OCI-LY7 (cell line): ENCODE measurements at regions of chr13 and their contacts with region 1.

Region 1: GRCh38 chr13:27523346-27524073 is 73.1 kb upstream of the MTIF3 start:
- DNase-seq: no peak
- H3K4me3 ChIP-seq: no peak overlapping the region
- H3K27ac ChIP-seq: no peak overlapping the region
- H3K4me1 ChIP-seq: no peaks in the 10 kb centered on the region
- CTCF ChIP-seq: no peak

Region 2: GRCh38 chr13:27374650-27375049 is 148.9 kb before region 1 on chr13:
- CTCF ChIA-PET with region 1: no interaction called
- POLR2A ChIA-PET with region 1: no interaction called
- intact Hi-C with region 1: loop called (anchors 10 kb)
- DNase-seq: peak; percentile 68
- H3K4me3 ChIP-seq: no peak overlapping the region
- H3K27ac ChIP-seq: no peak overlapping the region
- H3K4me1 ChIP-seq: no peaks in the 10 kb centered on the region
- CTCF ChIP-seq: peak; percentile 91

Region 3: DNA sequence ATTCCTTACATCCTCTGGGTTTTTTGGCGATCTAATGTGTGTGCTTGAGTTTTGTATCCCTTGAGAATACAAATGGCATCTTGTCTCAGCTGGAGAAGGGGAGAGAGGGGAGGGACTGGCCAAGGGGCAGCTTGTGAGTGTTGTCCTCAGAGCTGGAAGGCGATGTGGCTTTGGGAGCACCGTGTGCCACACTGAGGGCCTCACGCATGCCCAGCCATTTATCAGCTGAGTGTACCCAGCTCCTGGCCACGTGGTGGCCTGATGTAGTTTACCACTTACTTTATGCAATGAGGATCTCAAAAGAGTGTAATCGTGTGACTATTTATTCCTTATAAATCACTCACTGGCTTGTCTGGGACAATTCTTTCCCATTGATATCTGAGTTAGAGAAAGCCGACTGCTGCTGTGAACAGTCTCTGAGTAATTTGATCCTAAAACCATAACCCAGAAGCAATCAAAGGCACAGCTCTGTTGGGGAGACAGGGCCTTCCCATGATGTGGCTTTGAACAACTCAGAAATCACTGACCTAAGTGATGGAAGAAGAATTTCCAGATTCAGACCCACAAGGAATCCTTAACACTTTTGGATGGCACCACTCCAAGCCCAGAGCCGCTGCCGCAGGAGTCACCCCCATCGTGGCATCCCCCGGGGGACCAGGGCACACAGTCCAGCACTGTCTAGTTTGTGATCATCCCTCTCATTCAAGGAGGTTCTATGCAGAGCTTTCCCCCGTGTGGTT is 19.2 kb before region 1 on chr13:
- CTCF ChIA-PET with region 1: no interaction called
- POLR2A ChIA-PET with region 1: no interaction called
- intact Hi-C with region 1: no loop called
- DNase-seq: no peak
- H3K4me3 ChIP-seq: no peak overlapping the region
- H3K27ac ChIP-seq: no peak overlapping the region
- H3K4me1 ChIP-seq: no peaks in the 10 kb centered on the region
- CTCF ChIP-seq: no peak